HEK293 (cell line): ENCODE measurements at regions of chr21 and their contacts with region 1.

Region 1: GRCh38 chr21:41816220-41817165 is 49.6 kb upstream of the RIPK4 start:
- H3K4me3 ChIP-seq: no peak overlapping the region
- H3K27ac ChIP-seq: no peak overlapping the region
- H3K4me1 ChIP-seq: no peaks in the 10 kb centered on the region
- CTCF ChIP-seq: peak; percentile 63; the same call in 1 of the 2 replicates

Region 2: DNA sequence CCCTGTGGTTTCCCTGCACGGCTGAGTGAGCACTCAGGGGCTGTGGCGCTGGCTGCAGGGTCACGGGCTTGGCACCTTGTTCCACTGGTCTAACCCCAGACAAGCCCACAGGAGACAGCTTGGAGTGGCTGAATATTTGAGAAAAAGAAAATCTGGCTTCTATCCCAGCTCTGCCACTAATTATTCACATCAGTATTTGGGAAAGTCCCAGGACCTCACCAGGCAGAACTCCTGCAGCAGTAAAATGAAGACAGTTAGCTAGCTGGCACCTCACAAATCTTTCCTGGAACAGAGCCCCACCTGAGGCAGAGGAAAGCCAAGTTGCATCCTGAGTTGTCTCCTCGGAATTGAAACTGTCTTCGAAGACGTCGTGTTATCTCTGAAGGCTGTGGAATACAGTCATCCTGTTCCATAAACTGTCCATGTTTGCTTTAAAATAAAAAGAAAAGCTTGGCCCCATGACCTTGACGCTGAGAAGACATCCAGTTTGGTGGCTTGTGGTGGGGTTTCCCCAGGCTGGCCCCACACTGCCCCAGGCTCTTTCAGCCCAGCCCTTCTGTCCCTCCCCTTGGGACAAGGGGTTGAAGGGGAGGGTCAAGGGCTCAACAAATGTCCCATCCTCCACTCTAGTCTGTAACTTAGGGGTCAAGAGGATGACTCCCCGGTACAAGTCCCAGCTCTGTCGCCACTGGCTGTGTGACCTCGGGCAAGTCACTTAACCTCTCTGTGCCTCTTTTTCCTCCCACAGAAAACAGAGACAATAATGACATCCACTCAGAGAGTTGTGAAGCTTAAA is 214.7 kb before region 1 on chr21:
- CTCF ChIA-PET with region 1: interaction called, 12 read pairs
- POLR2A ChIA-PET with region 1: no interaction called
- H3K4me3 ChIP-seq: no peak overlapping the region
- H3K27ac ChIP-seq: no peak overlapping the region
- H3K4me1 ChIP-seq: no peaks in the 10 kb centered on the region
- CTCF ChIP-seq: no peak

Region 3: GRCh38 chr21:41783441-41784161 is 32.9 kb before region 1 on chr21:
- CTCF ChIA-PET with region 1: interaction called, 11 read pairs
- POLR2A ChIA-PET with region 1: interaction called, 9 read pairs
- H3K4me3 ChIP-seq: no peak overlapping the region
- H3K27ac ChIP-seq: peak overlapping the region; percentile 39
- H3K4me1 ChIP-seq: peaks cover 29% of the 10 kb centered on the region
- CTCF ChIP-seq: no peak

Region 4: DNA sequence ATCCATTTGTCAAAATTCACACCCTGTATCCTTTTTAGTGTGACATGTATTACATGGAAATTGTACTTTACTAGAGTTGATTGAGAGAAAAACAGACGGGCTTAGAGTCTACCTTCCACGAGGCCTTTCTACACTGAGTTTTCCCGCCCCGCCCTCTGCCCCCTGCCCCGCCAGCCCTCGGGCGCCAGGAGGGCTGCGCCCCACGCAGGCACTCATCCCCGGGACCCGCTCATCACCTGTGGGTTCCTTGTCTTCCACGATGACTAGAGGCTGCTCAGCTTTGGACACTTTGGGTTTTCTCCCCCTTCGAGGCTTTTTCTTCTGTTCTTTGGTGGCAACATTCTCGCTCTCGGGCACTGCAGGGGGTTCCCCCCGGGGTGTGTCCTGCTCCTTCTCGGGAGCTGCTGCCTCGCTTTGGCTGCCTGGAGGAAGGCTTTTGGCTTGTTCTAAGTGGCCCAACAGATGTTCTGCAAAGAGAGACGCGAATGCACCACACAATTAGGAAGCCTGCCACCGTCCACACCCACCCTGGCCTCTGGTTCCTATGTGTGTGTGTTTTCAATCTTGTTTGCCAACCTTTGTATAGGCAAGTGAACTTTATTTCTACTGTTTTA is 23.0 kb after region 1 on chr21:
- CTCF ChIA-PET with region 1: interaction called, 14 read pairs
- POLR2A ChIA-PET with region 1: no interaction called
- H3K4me3 ChIP-seq: no peak overlapping the region
- H3K27ac ChIP-seq: no peak overlapping the region
- H3K4me1 ChIP-seq: no peaks in the 10 kb centered on the region
- CTCF ChIP-seq: no peak

Region 5: DNA sequence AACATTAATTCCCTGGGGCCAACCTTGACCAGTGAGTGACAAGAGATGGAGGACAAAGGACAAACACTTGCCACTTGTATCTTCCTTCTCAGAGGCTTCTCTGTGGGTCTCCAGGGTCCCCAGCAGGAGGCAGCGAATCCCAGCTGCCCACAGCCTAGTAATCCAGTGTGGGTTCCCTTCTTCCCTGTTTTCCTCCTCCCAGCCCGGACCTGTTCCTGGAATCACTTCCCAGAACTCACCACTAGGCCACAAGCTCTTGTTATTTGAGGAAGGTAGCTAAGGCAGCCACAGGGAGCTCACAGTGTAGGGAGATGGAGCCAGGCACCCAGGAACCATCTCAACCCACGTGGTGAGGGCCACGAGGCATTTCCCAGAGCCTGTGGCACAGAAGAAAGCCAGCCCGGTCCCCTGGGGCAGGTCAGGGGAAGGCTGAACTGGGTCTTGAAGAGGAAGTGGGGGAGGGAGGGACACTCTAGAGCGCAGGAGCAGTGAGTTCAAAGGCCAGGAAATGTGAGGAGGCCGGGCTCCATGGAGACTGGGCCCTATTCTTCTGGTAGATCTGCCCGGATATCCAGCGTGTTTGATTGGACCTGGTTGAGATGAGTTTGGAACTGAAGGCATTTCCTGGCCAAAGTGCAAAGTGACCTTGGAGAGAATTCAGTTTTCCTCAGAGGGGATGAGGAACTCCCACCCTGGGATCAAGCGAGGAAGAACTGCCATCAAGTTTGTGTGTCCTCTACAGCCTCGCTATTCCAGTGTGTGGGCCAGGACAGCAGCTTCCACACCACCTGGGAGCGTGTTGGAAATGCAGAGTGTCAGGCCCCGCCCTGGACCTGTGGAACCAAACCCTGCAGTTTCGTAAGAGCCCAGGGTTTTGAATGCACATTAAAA is 157.6 kb after region 1 on chr21:
- CTCF ChIA-PET with region 1: no interaction called
- POLR2A ChIA-PET with region 1: no interaction called
- H3K4me3 ChIP-seq: no peak overlapping the region
- H3K27ac ChIP-seq: no peak overlapping the region
- H3K4me1 ChIP-seq: peaks cover 2% of the 10 kb centered on the region; the same call in 1 of the 2 replicates
- CTCF ChIP-seq: no peak

Region 6: DNA sequence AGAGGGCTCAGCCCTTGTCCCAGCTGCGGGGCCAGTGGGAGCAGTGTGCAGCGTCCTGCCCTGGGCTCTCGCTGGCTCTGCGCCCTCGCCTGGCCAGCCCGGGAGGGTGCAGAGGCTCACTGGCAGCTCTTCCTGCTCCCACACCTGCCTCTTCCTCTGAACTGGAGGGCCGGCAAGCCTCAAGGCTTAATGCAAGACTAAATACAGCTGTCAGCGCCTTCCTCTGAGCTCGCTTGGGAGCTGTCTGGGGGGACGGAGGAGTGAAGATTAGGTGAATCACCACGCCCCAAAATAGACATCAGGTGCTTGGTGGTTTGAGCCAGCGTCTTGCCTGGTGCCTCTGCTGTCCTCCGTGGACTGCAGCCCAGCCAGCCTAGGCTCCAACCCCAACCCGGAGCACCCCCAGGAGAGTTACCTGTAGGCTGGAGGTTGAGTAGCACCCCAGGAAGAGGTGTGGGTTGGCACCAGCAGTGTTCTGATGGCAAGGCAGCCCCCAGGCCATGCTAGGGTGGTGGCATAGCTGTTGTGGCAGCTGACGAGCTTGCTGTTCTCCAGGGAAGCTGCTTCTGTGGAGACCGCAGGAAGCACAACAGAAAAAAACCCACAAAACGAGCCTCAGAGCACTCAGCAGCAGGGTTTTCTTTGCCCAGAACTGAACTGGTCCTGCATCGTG is 291.5 kb after region 1 on chr21:
- CTCF ChIA-PET with region 1: interaction called, 23 read pairs
- POLR2A ChIA-PET with region 1: no interaction called
- H3K4me3 ChIP-seq: no peak overlapping the region
- H3K27ac ChIP-seq: no peak overlapping the region
- H3K4me1 ChIP-seq: no peaks in the 10 kb centered on the region
- CTCF ChIP-seq: peak; percentile 87